ENCODE measurements at regions of chr9 and their contacts with region 1.

Region 1: DNA sequence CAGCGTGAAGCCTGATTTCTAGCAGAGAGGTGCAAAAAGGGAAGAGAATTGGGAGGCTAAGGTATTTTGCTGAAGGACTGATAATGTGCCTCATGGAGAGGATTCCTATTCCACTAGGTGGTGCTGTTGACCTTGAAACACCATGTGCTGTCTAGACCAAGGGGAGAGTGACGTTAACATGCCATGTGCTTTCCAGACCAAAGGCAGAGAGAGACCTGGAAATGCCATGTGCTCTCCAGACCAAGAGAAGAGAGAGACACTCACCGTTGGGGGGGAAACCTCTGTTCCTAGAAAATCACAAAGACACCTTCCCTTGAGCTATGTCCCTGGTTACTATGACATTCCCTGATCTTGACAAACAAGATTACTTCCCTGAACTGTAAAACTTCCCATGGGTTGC is 286.0 kb upstream of the TUSC1 start:
- DNase-seq: no peak
- ATAC-seq: peak; percentile 92
- H3K4me3 ChIP-seq: no peak overlapping the region
- H3K27ac ChIP-seq: no peak overlapping the region
- H3K4me1 ChIP-seq: no peaks in the 10 kb centered on the region
- H3K27me3 ChIP-seq: no peaks in the 10 kb centered on the region
- CTCF ChIP-seq: peak; percentile 36 to 61 (median 54); a peak in 4 of 6 replicates
- EP300 ChIP-seq: no peak
- POLR2A ChIP-seq: no peak
- RAD21 ChIP-seq: peak; percentile 77

Region 2: DNA sequence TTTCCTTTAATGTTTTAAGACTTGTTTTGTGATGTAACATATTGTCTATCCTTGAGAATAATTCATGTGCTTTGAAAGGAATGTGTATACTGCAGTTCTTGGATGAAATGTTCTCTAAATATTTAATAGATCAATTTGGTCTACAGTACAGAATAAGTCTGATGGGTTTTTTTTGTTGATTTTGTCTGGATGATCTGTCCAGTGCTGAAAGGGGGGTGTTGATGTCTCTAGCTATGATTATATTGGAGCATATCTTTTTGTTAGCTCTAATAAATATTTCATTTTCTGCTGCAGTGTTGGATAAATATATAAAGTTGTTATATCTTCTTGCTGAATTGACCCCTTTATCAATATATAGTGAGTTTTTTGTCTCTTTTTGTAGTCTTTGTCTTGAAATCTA is 16.1 kb before region 1 on chr9:
- CTCF ChIA-PET with region 1: no interaction called
- POLR2A ChIA-PET with region 1: no interaction called
- RAD21 ChIA-PET with region 1: no interaction called
- SMC1A ChIA-PET with region 1: no interaction called
- in situ Hi-C with region 1: no loop called
- intact Hi-C with region 1: no loop called
- DNase-seq: no peak
- ATAC-seq: no peak
- H3K4me3 ChIP-seq: no peak overlapping the region
- H3K27ac ChIP-seq: no peak overlapping the region
- H3K4me1 ChIP-seq: no peaks in the 10 kb centered on the region
- H3K27me3 ChIP-seq: no peaks in the 10 kb centered on the region
- CTCF ChIP-seq: no peak
- EP300 ChIP-seq: no peak
- POLR2A ChIP-seq: no peak
- RAD21 ChIP-seq: no peak

Region 3: DNA sequence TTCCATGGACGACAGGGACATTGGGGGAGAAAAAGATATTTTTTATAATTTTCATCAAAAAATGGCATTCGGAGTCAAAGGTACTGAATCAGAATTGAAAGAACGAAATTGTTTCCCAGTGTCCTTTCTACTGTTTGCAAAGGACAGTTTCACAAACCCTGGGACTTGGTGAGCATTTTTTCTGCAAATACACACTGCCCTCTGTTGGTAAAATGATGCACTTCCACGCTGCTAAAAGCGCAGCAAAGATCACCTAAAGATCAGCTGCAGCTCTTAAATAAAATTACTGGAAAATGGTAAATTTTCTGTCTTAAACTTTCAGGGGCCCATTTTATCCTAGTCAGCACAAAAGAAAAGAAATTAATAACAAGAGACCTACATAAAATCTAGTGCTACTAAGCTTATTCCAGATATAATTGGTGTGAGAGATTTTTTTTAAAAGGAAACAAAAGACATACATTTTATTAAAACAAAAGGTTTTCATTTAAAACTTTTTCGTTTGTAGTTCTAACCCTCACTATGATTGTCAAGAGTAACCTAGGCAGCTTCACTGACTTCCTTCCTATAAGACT is 362.3 kb after region 1 on chr9:
- CTCF ChIA-PET with region 1: interaction called, 31 read pairs
- POLR2A ChIA-PET with region 1: no interaction called
- RAD21 ChIA-PET with region 1: interaction called, 6 read pairs
- SMC1A ChIA-PET with region 1: interaction called, 11 read pairs
- in situ Hi-C with region 1: loop called (anchors 5 kb)
- intact Hi-C with region 1: loop called (anchors 1 kb)
- DNase-seq: peak; percentile 17
- ATAC-seq: peak; percentile 86
- H3K4me3 ChIP-seq: no peak overlapping the region
- H3K27ac ChIP-seq: no peak overlapping the region
- H3K4me1 ChIP-seq: no peaks in the 10 kb centered on the region
- H3K27me3 ChIP-seq: no peaks in the 10 kb centered on the region
- CTCF ChIP-seq: peak; percentile 69 to 77 (median 73)
- EP300 ChIP-seq: no peak
- POLR2A ChIP-seq: no peak
- RAD21 ChIP-seq: peak; percentile 75

Region 4: DNA sequence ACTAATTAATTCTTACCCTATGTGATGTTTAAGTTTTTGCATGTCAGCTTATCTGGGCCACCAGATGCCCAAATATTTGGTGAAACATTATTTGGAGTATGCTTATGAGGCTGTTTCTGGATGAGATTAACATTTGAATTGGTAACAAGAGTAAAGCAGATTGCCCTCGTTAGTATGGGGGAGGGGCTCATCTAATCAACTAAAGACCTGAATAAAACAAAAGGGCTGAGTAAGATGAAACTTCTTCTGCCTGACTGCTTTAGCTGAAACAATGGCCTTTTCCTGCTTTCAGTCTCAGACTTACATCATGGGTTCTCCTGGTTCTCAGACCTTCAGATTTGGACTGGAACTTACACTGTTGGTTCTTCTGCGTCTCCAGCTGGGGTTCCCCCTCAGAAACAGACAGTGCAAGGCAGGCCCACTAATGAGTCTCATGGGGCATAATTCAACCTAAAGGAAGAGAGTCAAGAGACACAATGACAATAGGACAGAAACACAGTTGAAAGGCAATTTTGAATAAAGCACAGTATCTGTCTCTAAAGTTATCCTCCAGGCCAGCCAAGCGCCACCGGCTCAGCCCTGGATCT is 639.9 kb after region 1 on chr9:
- CTCF ChIA-PET with region 1: no interaction called
- POLR2A ChIA-PET with region 1: no interaction called
- RAD21 ChIA-PET with region 1: no interaction called
- SMC1A ChIA-PET with region 1: no interaction called
- in situ Hi-C with region 1: loop called (anchors 10 kb)
- intact Hi-C with region 1: no loop called
- DNase-seq: peak; percentile 2
- ATAC-seq: peak; percentile 92
- H3K4me3 ChIP-seq: no peak overlapping the region
- H3K27ac ChIP-seq: no peak overlapping the region
- H3K4me1 ChIP-seq: no peaks in the 10 kb centered on the region
- H3K27me3 ChIP-seq: no peaks in the 10 kb centered on the region
- CTCF ChIP-seq: no peak
- EP300 ChIP-seq: no peak
- POLR2A ChIP-seq: no peak
- RAD21 ChIP-seq: no peak

Region 5: DNA sequence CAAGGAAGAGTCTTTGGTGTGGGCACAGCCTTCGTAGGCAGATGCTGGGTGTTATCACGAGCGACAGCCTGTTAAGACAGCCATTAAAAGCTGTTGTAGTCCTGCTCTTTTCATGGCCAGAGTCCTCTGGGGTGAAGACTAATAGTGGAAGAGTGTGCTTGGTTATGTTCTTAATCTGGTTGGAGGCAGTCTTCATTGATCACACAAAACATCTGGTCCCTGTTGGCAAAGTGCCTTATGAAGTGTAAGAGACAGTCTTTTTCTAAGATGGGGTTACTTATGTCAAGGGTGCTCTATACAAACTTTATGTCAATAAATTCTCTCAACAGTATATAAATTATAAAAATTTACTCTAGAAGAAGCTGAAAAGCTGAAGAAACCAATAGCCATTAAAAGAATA is 648.0 kb after region 1 on chr9:
- CTCF ChIA-PET with region 1: interaction called, 5 read pairs
- POLR2A ChIA-PET with region 1: no interaction called
- RAD21 ChIA-PET with region 1: interaction called, 4 read pairs
- SMC1A ChIA-PET with region 1: no interaction called
- in situ Hi-C with region 1: loop called (anchors 10 kb)
- intact Hi-C with region 1: loop called (anchors 1 kb)
- DNase-seq: no peak
- ATAC-seq: no peak
- H3K4me3 ChIP-seq: no peak overlapping the region
- H3K27ac ChIP-seq: no peak overlapping the region
- H3K4me1 ChIP-seq: no peaks in the 10 kb centered on the region
- H3K27me3 ChIP-seq: no peaks in the 10 kb centered on the region
- CTCF ChIP-seq: no peak
- EP300 ChIP-seq: no peak
- POLR2A ChIP-seq: no peak
- RAD21 ChIP-seq: no peak

Region 6: DNA sequence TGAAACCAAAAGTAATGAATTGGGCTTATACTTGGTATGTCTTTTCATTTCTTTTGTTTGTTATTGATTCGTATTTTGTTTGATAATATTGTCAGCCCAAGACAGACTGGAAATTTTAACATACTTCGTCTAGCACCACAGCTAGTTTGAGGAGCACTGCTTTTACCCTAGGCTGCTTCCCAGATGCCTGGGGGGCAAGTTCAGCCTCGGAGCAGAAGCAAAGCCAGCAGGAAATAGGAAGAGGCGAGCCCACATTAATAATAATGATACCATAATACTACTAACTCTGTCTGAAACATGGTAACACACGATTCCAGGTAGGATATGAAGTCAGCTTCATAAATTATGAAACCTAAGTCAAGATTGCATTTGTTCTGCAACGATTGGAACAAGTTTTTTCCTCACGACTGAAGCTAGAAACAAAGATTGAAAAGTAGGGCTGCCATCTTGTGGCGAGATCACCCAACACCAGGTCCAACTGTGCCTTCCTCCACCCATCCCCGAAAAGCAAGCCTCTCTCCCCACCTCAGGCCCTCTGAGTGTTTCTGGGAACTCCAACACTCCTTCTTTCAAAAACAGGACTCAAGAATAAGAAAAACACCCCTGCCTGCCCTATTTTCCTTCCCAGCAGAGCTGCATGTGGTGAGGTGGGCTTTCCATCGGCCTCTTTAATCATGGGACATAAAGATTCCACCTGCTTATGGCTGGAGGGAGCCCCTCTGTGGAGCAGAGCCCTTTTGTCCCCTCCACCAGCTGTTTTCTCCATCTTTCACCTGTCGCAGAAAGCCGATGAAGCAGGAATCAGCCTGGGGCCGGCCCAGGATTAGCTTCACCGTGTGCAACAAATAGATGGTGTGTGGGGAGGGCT is 692.0 kb after region 1 on chr9:
- CTCF ChIA-PET with region 1: no interaction called
- POLR2A ChIA-PET with region 1: no interaction called
- RAD21 ChIA-PET with region 1: no interaction called
- SMC1A ChIA-PET with region 1: no interaction called
- in situ Hi-C with region 1: no loop called
- intact Hi-C with region 1: loop called (anchors 1 kb)
- DNase-seq: no peak
- ATAC-seq: peak; percentile 81
- H3K4me3 ChIP-seq: no peak overlapping the region
- H3K27ac ChIP-seq: no peak overlapping the region
- H3K4me1 ChIP-seq: no peaks in the 10 kb centered on the region
- H3K27me3 ChIP-seq: no peaks in the 10 kb centered on the region; a peak in 1 of 4 replicates
- CTCF ChIP-seq: peak; percentile 28 to 43 (median 39); a peak in 4 of 6 replicates
- EP300 ChIP-seq: no peak
- POLR2A ChIP-seq: no peak
- RAD21 ChIP-seq: 0 out of 2 replicates have a peak, but pooled peaks have one; percentile 4

Region 7: GRCh38 chr9:26856413-26857032 is 892.3 kb after region 1 on chr9:
- CTCF ChIA-PET with region 1: no interaction called
- POLR2A ChIA-PET with region 1: no interaction called
- RAD21 ChIA-PET with region 1: no interaction called
- SMC1A ChIA-PET with region 1: no interaction called
- in situ Hi-C with region 1: no loop called
- intact Hi-C with region 1: loop called (anchors 10 kb)
- DNase-seq: peak; percentile 45
- ATAC-seq: peak; percentile 97
- H3K4me3 ChIP-seq: no peak overlapping the region
- H3K27ac ChIP-seq: no peak overlapping the region
- H3K4me1 ChIP-seq: no peaks in the 10 kb centered on the region
- H3K27me3 ChIP-seq: no peaks in the 10 kb centered on the region
- CTCF ChIP-seq: peak; percentile 69 to 72 (median 70)
- EP300 ChIP-seq: no peak
- POLR2A ChIP-seq: no peak
- RAD21 ChIP-seq: peak; percentile 74